Left cardiac atrium (tissue), 4 donors: ENCODE measurements at regions of chr7 and their contacts with region 1.

Region 1: GRCh38 chr7:63925623-63926460 is 72.8 kb upstream of the ZNF722 start:
- DNase-seq: peak; percentile 96
- ATAC-seq: peak; percentile 98 to 99

Region 2: GRCh38 chr7:64045301-64046040 is 119.6 kb after region 1 on chr7 and contains the start of gene ZNF727:
- intact Hi-C with region 1: loop called in 1 of 2 experiments (anchors 10 kb)
- DNase-seq: peak; percentile 86
- ATAC-seq: peak; percentile 97 to 99
- total RNA-seq, gene ZNF727: 2.5 to 3.2 TPM

Region 3: DNA sequence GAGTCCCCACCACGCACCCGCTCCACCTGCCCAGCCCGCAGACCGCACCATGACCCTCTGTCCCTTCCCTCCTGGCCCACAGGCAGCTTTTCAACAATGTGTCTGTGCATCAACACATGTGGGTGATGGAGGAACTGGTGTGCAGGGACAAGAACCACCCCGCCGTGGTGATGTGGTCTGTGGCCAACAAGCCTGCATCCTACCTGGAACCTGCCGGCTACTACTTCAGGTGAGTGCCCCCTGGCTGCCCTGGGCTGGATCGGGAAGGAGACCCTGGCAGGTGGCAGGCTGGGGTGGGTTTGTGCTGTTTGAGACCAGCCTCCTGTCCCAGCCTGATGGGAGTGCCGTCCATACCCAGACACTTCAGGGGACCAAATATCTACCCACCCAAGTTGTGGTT is 188.9 kb after region 1 on chr7:
- intact Hi-C with region 1: no loop called
- DNase-seq: no peak
- ATAC-seq: no peak

Region 4: GRCh38 chr7:64768824-64769223 is 843.0 kb after region 1 on chr7:
- intact Hi-C with region 1: no loop called
- DNase-seq: no peak
- ATAC-seq: no peak